ENCODE measurements at regions of chr1 and their contacts with region 1.

Region 1: GRCh38 chr1:59007820-59008598 is 224.2 kb upstream of the JUN start:
- DNase-seq: peak; percentile 59
- ATAC-seq: peak; percentile 87
- H3K4me3 Mint-ChIP-seq: no peak overlapping the region
- H3K27ac Mint-ChIP-seq: peak overlapping the region; percentile 61
- H3K4me1 Mint-ChIP-seq: peaks cover 39% of the 10 kb centered on the region
- H3K27me3 Mint-ChIP-seq: peaks cover 3% of the 10 kb centered on the region

Region 2: GRCh38 chr1:58903514-58904298 is 104.3 kb before region 1 on chr1:
- CTCF ChIA-PET with region 1: no interaction called
- POLR2A ChIA-PET with region 1: no interaction called
- intact Hi-C with region 1: loop called in 1 of 2 experiments (anchors 5 kb)
- DNase-seq: peak; percentile 92
- ATAC-seq: peak; percentile 94
- H3K4me3 Mint-ChIP-seq: peak overlapping the region; percentile 62
- H3K27ac Mint-ChIP-seq: peak overlapping the region; percentile 80
- H3K4me1 Mint-ChIP-seq: peaks cover 15% of the 10 kb centered on the region
- H3K27me3 Mint-ChIP-seq: no peaks in the 10 kb centered on the region

Region 3: DNA sequence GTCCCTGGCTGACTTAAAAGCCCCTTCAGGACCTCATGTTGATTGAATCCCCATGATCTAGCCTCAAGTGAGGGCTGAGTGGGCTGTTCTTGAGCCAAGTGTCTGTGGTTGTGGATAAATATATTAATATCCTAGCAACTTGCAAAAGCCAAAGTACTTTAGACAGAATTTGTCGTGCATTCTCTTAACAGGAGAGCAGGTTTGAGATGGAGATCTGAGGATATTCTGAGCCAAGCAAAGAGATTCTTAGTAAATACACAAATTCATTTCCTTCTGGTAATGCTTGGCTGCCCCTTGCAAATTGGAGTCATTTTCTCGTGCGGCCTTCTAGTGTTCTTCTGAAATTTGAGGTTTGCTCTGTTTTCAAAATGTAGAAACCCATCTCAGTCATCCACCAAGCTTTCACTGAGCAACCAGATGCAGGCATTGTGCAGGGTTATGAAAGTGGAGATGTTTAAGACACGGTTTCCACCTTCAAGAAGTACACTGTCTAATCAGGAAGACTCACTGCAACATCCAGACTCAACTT is 18.0 kb after region 1 on chr1:
- CTCF ChIA-PET with region 1: no interaction called
- POLR2A ChIA-PET with region 1: no interaction called
- intact Hi-C with region 1: loop called in 1 of 2 experiments (anchors 1 kb)
- DNase-seq: peak; percentile 16
- ATAC-seq: peak; percentile 69
- H3K4me3 Mint-ChIP-seq: no peak overlapping the region
- H3K27ac Mint-ChIP-seq: peak overlapping the region; percentile 80
- H3K4me1 Mint-ChIP-seq: peaks cover 24% of the 10 kb centered on the region
- H3K27me3 Mint-ChIP-seq: no peaks in the 10 kb centered on the region

Region 4: GRCh38 chr1:59076612-59077011 is 68.6 kb after region 1 on chr1:
- CTCF ChIA-PET with region 1: no interaction called
- POLR2A ChIA-PET with region 1: no interaction called
- intact Hi-C with region 1: loop called in 1 of 2 experiments (anchors 2 kb)
- DNase-seq: no peak
- ATAC-seq: no peak
- H3K4me3 Mint-ChIP-seq: no peak overlapping the region
- H3K27ac Mint-ChIP-seq: no peak overlapping the region
- H3K4me1 Mint-ChIP-seq: peaks cover 27% of the 10 kb centered on the region
- H3K27me3 Mint-ChIP-seq: no peaks in the 10 kb centered on the region